ENCODE measurements at regions of chr14 and their contacts with region 1.

Region 1: GRCh38 chr14:71523630-71524319 is 408.5 kb upstream of the RGS6 start:
- DNase-seq: peak; percentile 38
- CTCF ChIP-seq: no peak

Region 2: DNA sequence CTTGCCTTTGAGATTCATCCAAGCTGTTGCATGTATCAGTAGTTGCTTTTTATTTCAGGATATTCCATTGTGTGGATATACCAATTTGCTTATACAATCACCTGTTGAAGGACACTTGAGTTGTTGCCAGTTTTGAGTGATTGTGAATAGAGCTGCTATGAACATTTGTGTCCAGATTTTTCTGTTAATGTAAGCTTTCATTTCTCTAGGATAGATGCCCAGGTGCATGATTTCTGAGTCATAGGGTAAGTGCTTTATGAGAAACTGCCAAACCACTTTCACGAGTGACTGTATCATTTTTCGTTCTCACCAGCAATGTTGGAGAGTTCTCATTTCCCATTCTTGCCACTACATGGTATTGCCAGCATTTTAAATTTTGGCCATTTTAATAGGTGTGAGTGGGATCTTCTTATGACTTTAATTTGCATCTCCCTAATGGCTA is 26.1 kb before region 1 on chr14:
- CTCF ChIA-PET with region 1: interaction called, 12 read pairs
- POLR2A ChIA-PET with region 1: no interaction called
- DNase-seq: peak; percentile 52
- CTCF ChIP-seq: no peak